Spleen (tissue), 13 donors: ENCODE measurements at regions of chr1 and their contacts with region 1.

Region 1: DNA sequence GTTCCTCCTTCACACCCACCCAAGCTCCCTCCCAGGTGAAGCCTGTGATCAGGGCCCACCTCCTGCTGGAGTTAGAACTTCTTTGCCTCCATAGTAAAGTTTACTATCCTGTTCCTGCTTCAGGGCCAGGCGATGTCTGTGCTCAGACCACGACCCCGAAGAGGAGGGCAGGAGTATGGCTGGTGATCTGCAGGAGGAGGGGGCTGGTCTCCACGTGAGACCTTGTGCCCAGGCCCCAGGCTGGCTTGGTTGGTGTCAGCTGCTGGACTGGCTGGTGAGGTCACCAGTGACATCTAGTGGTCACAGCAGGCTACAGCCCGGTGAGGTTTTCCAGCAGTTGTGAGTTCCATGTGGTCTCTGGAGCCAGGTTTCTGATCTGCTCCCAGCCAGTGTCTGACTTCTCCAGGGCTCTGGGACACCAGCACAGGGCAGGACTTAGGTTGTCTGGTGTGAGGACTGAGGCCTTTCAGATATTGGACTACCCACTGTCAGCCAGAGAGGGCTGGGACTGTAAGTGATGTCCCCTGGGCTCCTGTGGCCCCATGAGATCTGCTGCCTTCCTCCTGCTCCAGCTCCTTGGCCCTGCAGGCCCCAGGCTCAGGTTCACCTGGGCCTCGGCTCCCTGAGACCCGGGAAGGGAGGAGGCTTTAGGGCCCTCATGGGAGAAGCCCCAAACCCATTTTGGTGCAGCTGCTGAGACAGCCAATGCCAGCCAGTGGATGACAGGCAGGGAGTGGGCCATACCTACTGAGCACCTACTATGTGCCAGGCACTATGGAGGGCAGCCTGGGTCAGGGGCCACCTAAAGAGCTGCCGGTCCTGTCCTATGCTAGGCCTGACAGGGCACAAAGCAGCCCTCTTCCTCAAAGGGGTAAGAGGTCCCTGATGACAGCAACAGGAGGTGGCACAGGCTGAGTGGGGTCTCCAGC is 6.0 kb upstream of the UBL4B start:
- DNase-seq: peak; percentile 86
- H3K4me3 ChIP-seq: no peak overlapping the region
- H3K27ac ChIP-seq: no peak overlapping the region
- H3K4me1 ChIP-seq: peaks cover 0 to 27% (median 11%) of the 10 kb centered on the region in 6 donors
- H3K27me3 ChIP-seq: peaks cover 0 to 10% (median 0%) of the 10 kb centered on the region in 7 donors
- CTCF ChIP-seq: peak; percentile 68 to 94 (median 85)
- POLR2A ChIP-seq: no peak

Region 2: DNA sequence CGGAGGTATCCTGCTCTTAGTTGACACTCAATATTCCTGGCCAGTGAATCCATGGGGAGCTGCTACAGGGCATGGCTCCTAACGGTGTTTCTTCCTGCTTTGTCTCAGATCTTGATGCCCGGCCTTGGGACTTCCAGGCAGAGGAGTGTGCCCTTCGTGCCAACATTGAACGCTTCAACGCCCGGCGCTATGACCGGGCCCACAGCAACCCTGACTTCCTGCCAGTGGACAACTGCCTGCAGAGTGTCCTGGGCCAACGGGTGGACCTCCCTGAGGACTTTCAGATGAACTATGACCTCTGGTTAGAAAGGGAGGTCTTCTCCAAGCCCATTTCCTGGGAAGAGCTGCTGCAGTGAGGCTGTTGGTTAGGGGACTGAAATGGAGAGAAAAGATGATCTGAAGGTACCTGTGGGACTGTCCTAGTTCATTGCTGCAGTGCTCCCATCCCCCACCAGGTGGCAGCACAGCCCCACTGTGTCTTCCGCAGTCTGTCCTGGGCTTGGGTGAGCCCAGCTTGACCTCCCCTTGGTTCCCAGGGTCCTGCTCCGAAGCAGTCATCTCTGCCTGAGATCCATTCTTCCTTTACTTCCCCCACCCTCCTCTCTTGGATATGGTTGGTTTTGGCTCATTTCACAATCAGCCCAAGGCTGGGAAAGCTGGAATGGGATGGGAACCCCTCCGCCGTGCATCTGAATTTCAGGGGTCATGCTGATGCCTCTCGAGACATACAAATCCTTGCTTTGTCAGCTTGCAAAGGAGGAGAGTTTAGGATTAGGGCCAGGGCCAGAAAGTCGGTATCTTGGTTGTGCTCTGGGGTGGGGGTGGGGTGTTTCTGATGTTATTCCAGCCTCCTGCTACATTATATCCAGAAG is 52.5 kb before region 1 on chr1:
- intact Hi-C with region 1: loop called (anchors 5 kb)
- DNase-seq: peak; percentile 90
- H3K4me3 ChIP-seq: no peak overlapping the region
- H3K27ac ChIP-seq: peak overlapping the region in 5 of 8 donors; percentile 46 to 81 (median 77)
- H3K4me1 ChIP-seq: peaks cover 3 to 91% (median 50%) of the 10 kb centered on the region in 6 donors
- H3K27me3 ChIP-seq: no peaks in the 10 kb centered on the region
- CTCF ChIP-seq: peak; percentile 81 to 96 (median 93)
- POLR2A ChIP-seq: no peak

Region 3: GRCh38 chr1:110203021-110203661 is 96.9 kb after region 1 on chr1:
- intact Hi-C with region 1: no loop called
- DNase-seq: no peak
- H3K4me3 ChIP-seq: no peak overlapping the region
- H3K27ac ChIP-seq: peak overlapping the region in 3 of 8 donors; percentile 33 to 69 (median 36)
- H3K4me1 ChIP-seq: peaks cover 0 to 23% (median 13%) of the 10 kb centered on the region in 6 donors
- H3K27me3 ChIP-seq: no peaks in the 10 kb centered on the region
- CTCF ChIP-seq: peak; percentile 70 to 94 (median 90)
- POLR2A ChIP-seq: no peak